ENCODE measurements at regions of chr12 and their contacts with region 1.

Region 1: DNA sequence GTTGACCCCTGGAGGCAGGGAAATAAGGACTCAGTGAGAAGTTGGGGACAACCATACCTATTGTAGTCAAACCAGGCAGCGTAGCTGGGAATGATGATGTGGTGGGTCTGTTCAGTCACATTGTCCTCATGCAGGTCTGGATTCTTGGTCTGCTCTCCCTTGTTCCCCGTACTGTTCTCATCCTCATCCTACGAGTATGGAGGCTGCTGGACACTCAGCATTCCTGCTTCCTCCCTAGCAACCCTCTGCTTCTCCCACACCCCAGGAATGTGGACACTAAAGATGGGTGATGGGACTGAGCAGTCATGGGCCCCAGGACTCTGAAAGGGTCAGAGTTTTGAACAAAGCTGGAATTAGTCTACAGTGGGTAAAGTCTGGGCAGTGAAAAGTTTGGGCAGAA is 10.9 kb downstream of the SMARCC2 start:
- DNase-seq: no peak
- ATAC-seq: no peak
- H3K4me3 ChIP-seq: no peak overlapping the region
- H3K4me3 Mint-ChIP-seq: no peak overlapping the region
- H3K27ac ChIP-seq: no peak overlapping the region
- H3K27ac Mint-ChIP-seq: no peak overlapping the region
- H3K4me1 ChIP-seq: no peaks in the 10 kb centered on the region
- H3K4me1 Mint-ChIP-seq: no peaks in the 10 kb centered on the region
- H3K27me3 ChIP-seq: no peaks in the 10 kb centered on the region
- H3K27me3 Mint-ChIP-seq: no peaks in the 10 kb centered on the region
- CTCF ChIP-seq: no peak

Region 2: DNA sequence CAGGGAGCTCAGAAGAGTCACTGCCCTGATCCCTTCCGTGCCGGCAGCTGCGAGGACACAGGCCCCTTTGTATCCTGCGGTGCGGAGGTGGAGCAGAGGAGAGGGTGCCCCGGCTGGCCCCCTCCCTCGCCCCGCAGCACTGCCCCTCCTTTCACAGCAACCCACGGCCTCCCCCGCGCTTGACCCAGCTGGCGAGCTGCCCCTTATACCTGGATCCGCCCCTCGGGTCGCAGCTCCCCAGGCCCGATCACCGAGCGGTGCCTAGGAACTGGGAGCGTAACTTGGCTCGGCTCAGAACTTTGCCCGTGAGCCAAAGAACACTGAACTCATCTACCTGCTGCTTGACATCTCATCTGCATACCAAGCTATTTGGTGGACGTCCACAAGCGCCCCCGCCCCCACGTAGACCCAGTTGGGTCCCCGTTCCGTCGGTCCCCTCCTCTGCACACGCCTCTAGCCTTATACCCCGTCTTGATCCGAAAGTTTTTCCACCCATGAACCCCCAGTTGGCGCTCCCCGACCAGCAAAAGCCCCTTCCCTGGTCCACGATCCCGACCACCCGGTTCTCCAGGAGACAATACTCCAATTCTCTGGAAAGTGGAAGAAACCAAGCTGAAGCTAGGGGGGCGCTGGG is 348.3 kb before region 1 on chr12:
- CTCF ChIA-PET with region 1: no interaction called
- POLR2A ChIA-PET with region 1: no interaction called
- intact Hi-C with region 1: no loop called
- DNase-seq: peak in 11 of 14 experiments; percentile 4 to 54 (median 21)
- ATAC-seq: peak; percentile 23
- H3K4me3 ChIP-seq: peak overlapping the region; percentile 98
- H3K4me3 Mint-ChIP-seq: peak overlapping the region; percentile 100
- H3K27ac ChIP-seq: peak overlapping the region; percentile 52 to 70
- H3K27ac Mint-ChIP-seq: peak overlapping the region; percentile 88
- H3K4me1 ChIP-seq: peaks cover 58% of the 10 kb centered on the region
- H3K4me1 Mint-ChIP-seq: peaks cover 61% of the 10 kb centered on the region
- H3K27me3 ChIP-seq: no peaks in the 10 kb centered on the region
- H3K27me3 Mint-ChIP-seq: no peaks in the 10 kb centered on the region
- CTCF ChIP-seq: no peak

Region 3: GRCh38 chr12:56158029-56158925 is 20.1 kb before region 1 on chr12 and contains the start of gene MYL6:
- CTCF ChIA-PET with region 1: no interaction called
- POLR2A ChIA-PET with region 1: interaction called, 10 read pairs
- intact Hi-C with region 1: no loop called
- DNase-seq: peak; percentile 77 to 98 (median 86)
- ATAC-seq: peak; percentile 80
- H3K4me3 ChIP-seq: peak within 1 kb of the TSS; percentile 78
- H3K4me3 Mint-ChIP-seq: peak within 1 kb of the TSS; percentile 96
- H3K27ac ChIP-seq: peak within 1 kb of the TSS; percentile 84 to 92
- H3K27ac Mint-ChIP-seq: peak within 1 kb of the TSS; percentile 92
- H3K4me1 ChIP-seq: peaks cover 52% of the 10 kb centered on the region
- H3K4me1 Mint-ChIP-seq: peaks cover 40% of the 10 kb centered on the region
- H3K27me3 ChIP-seq: no peaks in the 10 kb centered on the region
- H3K27me3 Mint-ChIP-seq: no peaks in the 10 kb centered on the region
- CTCF ChIP-seq: peak; percentile 6
- total RNA-seq, gene MYL6: 670 to 673 TPM